ENCODE measurements at regions of chr17 and their contacts with region 1.

Region 1: DNA sequence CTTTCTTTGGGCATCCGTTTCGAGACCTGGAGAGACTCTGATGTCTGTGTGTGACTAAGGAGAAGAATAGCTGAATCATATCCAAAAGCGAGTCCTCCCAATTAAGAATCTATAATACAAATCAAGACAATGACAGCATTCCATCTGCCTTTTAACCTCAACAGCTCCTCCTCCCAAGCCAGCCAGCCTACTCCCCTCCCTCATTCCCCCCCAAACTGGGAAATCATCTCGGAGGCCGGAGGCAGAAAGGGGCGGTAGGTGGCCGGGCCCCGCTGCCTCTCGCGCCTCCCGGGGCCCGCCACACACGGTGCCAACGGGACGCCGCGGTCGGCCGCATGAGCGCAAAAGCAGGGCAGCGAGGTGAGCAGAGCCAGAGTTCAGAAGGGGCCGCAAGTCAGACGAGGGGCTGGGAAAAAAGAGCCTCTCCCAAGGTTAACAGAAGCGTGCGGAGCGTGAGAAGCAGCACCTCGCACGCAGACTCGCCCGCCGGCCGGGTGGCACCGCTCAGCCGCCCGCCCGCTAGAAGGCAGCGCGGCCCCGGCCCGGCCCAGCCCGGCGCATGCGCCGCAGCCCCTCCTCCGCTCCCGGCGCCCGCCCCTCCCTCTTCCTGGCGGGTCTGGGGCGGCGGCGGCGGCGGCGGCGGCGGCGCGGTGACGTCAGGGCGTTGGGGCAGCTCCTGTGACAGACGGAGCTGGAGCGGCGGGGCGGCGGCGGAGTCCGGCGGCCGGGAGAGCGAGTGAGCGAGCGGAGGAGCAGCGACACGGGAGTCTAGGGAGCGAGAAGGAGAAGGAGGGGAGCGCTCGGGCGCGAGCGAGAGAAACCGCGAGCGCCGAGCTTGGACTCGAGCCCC is at the start of gene PAFAH1B1:
- DNase-seq: peak; percentile 99
- H3K4me3 ChIP-seq: peak within 1 kb of the TSS; percentile 52 to 99 (median 90)
- H3K27ac ChIP-seq: peak within 1 kb of the TSS; percentile 98 to 100 (median 99)
- H3K4me1 ChIP-seq: peaks cover 29 to 50% (median 45%) of the 10 kb centered on the region in 6 donors
- H3K27me3 ChIP-seq: no peaks in the 10 kb centered on the region
- CTCF ChIP-seq: peak in 4 of 11 experiments; percentile 13 to 33 (median 20)
- POLR2A ChIP-seq: peak in 2 of 3 donors; percentile 53 to 62
- total RNA-seq, gene PAFAH1B1: 101 to 175 (median 117) TPM

Region 2: DNA sequence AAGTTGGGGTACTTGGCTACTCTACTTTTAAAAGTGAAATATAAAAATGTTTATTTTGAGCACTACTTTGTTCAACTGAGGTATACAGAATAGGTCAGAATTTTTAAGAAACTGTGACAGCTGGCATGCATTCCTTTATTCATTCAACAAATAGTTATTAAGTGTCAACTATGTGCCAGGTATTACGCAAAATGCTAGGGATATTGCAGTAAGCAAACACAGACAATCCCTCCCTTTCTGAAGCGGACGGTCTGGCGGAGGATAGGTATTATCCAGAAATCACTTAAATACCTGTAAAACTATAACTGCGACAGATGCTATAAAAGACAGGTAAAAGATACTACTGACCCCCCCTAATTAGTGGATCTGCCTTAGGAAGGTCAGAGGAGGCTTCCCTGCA is 107.7 kb before region 1 on chr17:
- intact Hi-C with region 1: no loop called
- DNase-seq: no peak
- H3K4me3 ChIP-seq: peak overlapping the region in 5 of 8 donors; percentile 12 to 54 (median 26)
- H3K27ac ChIP-seq: peak overlapping the region in 6 of 8 donors; percentile 43 to 71 (median 68)
- H3K4me1 ChIP-seq: peaks cover 10 to 89% (median 39%) of the 10 kb centered on the region in 6 donors
- H3K27me3 ChIP-seq: no peaks in the 10 kb centered on the region
- CTCF ChIP-seq: no peak
- POLR2A ChIP-seq: no peak

Region 3: DNA sequence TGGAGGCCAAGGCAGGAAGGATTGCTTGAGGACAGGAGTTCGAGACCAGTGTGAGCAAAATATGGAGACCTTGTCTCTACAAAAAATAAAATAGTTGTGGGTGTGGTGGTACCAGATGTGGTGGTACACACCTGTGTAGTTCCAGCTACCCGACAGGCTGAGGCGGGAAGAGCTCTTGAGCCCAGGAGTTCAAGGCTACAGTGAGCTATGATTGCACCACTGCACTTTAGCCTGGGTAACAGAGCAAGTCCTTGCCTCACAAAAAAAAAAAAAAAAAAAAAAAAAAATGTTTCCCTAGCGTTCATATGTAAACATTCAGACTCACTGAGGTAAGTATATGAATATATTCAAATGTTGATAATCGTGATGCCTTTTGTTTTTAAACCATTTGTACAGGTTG is 78.8 kb after region 1 on chr17:
- intact Hi-C with region 1: loop called (anchors 10 kb)
- DNase-seq: no peak
- H3K4me3 ChIP-seq: no peak overlapping the region
- H3K27ac ChIP-seq: no peak overlapping the region
- H3K4me1 ChIP-seq: peaks cover 0 to 13% (median 0%) of the 10 kb centered on the region in 6 donors
- H3K27me3 ChIP-seq: no peaks in the 10 kb centered on the region
- CTCF ChIP-seq: no peak
- POLR2A ChIP-seq: no peak